Activated T-helper 2 cell treated with anti-CD3 and anti-CD28 coated beads, Interferon-gamma antibody, Interleukin-2, Interleukin-4, amounts not matched to agents 10 μg/mL and 5 μg/mL and 100 μg/mL, durations not matched to agents 14 hours and 24 hours and 36 hours (primary cell): ENCODE measurements at regions of chr4 and their contacts with region 1.

Region 1: DNA sequence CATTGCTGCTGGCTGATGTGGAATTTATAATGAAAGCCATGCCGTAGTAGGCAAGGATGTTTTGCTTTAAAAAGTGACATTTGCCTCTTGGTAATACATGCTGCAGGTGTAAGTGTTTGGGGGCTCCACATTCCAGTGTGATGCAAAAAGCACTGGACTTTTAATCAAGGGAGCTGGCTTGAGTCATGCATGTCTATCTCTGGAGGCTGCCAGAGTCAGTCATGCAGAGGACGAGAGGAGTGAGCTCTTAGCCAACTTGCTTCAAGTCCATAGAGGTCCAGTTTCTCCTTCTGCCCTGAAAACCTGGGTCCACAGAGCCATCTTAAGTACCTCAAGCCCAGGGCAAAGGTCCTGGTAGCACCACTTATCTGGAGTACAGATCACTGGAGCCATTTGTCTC is 11.6 kb upstream of the CXCL13 start:
- DNase-seq: no peak
- H3K4me3 Mint-ChIP-seq: no peak overlapping the region
- H3K27ac Mint-ChIP-seq: peak overlapping the region; percentile 66
- H3K4me1 Mint-ChIP-seq: peaks cover 55% of the 10 kb centered on the region
- H3K27me3 Mint-ChIP-seq: no peaks in the 10 kb centered on the region

Region 2: GRCh38 chr4:76920715-76921114 is 673.3 kb before region 1 on chr4:
- intact Hi-C with region 1: no loop called
- DNase-seq: no peak
- H3K4me3 Mint-ChIP-seq: no peak overlapping the region
- H3K27ac Mint-ChIP-seq: no peak overlapping the region
- H3K4me1 Mint-ChIP-seq: no peaks in the 10 kb centered on the region
- H3K27me3 Mint-ChIP-seq: peaks cover 12% of the 10 kb centered on the region

Region 3: GRCh38 chr4:77473509-77473908 is 120.5 kb before region 1 on chr4:
- intact Hi-C with region 1: no loop called
- DNase-seq: no peak
- H3K4me3 Mint-ChIP-seq: no peak overlapping the region
- H3K27ac Mint-ChIP-seq: no peak overlapping the region
- H3K4me1 Mint-ChIP-seq: peaks cover 8% of the 10 kb centered on the region
- H3K27me3 Mint-ChIP-seq: peaks cover 15% of the 10 kb centered on the region

Region 4: GRCh38 chr4:77579406-77580076 is 14.5 kb before region 1 on chr4:
- intact Hi-C with region 1: loop called (anchors 1 kb)
- DNase-seq: no peak
- H3K4me3 Mint-ChIP-seq: no peak overlapping the region
- H3K27ac Mint-ChIP-seq: peak overlapping the region; percentile 47
- H3K4me1 Mint-ChIP-seq: peaks cover 42% of the 10 kb centered on the region
- H3K27me3 Mint-ChIP-seq: no peaks in the 10 kb centered on the region